ENCODE measurements at regions of chrX and their contacts with region 1.

Region 1: GRCh38 chrX:154526901-154527675 is 11.1 kb upstream of the FAM3A start:
- DNase-seq: peak; percentile 72
- H3K4me3 ChIP-seq: peak overlapping the region; percentile 9; a peak in 1 of 4 replicates
- H3K27ac ChIP-seq: peak overlapping the region; percentile 60 to 69
- H3K4me1 ChIP-seq: peaks cover 3 to 4% of the 10 kb centered on the region in 2 experiments; a peak in 2 of 4 replicates
- H3K27me3 ChIP-seq: peaks cover 18% of the 10 kb centered on the region; the same call in 1 of the 2 replicates
- CTCF ChIP-seq: peak; percentile 64
- EP300 ChIP-seq: no peak
- RAD21 ChIP-seq: peak; percentile 40

Region 2: DNA sequence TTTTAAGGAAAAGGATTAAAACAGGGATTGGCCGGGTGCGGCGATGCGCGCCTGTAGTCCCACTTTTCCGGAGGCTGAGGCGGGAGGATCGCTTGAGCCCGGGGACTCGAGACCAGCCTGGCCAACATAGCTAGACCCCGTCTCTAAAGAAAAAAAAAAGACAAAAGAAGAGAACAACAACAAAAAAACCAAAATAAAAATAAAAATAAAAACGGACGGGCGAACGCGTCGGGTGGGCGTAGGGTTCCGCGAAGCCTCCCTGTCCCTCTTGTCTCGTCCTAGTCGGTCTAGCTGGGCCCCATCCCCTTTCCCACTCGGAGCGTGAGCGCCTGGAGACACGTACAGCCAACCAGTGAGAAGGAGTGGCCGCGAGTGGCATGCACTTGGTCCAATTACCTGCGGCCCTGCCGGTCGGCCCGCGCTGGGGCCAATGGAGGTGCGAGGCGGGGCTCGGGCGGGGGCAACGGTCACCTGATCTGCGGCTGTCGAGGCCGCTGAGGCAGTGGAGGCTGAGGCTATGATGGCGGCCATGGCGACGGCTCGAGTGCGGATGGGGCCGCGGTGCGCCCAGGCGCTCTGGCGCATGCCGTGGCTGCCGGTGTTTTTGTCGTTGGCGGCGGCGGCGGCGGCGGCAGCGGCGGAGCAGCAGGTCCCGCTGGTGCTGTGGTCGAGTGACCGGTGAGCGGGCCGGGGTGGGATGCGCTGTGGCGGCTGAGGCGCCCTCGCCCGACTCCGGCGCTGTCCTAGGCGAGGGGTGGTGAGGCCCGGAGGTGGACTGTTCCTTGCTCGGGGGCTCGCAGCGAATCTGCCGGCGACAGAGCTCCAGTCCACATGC is 98.7 kb before region 1 on chrX and contains the start of gene ATP6AP1:
- CTCF ChIA-PET with region 1: no interaction called
- POLR2A ChIA-PET with region 1: no interaction called
- DNase-seq: peak; percentile 91
- H3K4me3 ChIP-seq: peak within 1 kb of the TSS; percentile 56 to 70
- H3K27ac ChIP-seq: peak within 1 kb of the TSS in 1 of 2 experiments; percentile 41; a peak in 1 of 4 replicates
- H3K4me1 ChIP-seq: peaks cover 0 to 6% of the 10 kb centered on the region in 2 experiments; a peak in 1 of 4 replicates
- H3K27me3 ChIP-seq: peaks cover 9% of the 10 kb centered on the region
- CTCF ChIP-seq: no peak; the same call in 1 of the 2 replicates
- EP300 ChIP-seq: no peak
- RAD21 ChIP-seq: peak; percentile 34; the same call in 1 of the 2 replicates
- polyA plus RNA-seq, gene ATP6AP1: 92.2 and 102 TPM in 2 replicates

Region 3: GRCh38 chrX:154516656-154517100 is 10.4 kb before region 1 on chrX:
- CTCF ChIA-PET with region 1: interaction called, 14 read pairs
- POLR2A ChIA-PET with region 1: interaction called, 5 read pairs
- DNase-seq: no peak
- H3K4me3 ChIP-seq: peak overlapping the region in 1 of 2 experiments; percentile 37; a peak in 3 of 4 replicates
- H3K27ac ChIP-seq: peak overlapping the region; percentile 49 to 65; a peak in 3 of 4 replicates
- H3K4me1 ChIP-seq: peaks cover 0 to 6% of the 10 kb centered on the region in 2 experiments; a peak in 1 of 4 replicates
- H3K27me3 ChIP-seq: peaks cover 6% of the 10 kb centered on the region; the same call in 1 of the 2 replicates
- CTCF ChIP-seq: no peak
- EP300 ChIP-seq: no peak
- RAD21 ChIP-seq: no peak